Activated CD8-positive, alpha-beta T cell treated with anti-CD3 and anti-CD28 coated beads for 36 hours (primary cell): ENCODE measurements at regions of chr12 and their contacts with region 1.

Region 1: GRCh38 chr12:42023733-42024494 is 120.8 kb downstream of the GXYLT1 start:
- DNase-seq: peak; percentile 76
- ATAC-seq: peak; percentile 92
- H3K4me3 Mint-ChIP-seq: peak overlapping the region; percentile 62
- H3K27ac Mint-ChIP-seq: no peak overlapping the region
- H3K4me1 Mint-ChIP-seq: peaks cover 8% of the 10 kb centered on the region
- H3K27me3 Mint-ChIP-seq: peaks cover 12% of the 10 kb centered on the region
- CTCF ChIP-seq: peak; percentile 96

Region 2: DNA sequence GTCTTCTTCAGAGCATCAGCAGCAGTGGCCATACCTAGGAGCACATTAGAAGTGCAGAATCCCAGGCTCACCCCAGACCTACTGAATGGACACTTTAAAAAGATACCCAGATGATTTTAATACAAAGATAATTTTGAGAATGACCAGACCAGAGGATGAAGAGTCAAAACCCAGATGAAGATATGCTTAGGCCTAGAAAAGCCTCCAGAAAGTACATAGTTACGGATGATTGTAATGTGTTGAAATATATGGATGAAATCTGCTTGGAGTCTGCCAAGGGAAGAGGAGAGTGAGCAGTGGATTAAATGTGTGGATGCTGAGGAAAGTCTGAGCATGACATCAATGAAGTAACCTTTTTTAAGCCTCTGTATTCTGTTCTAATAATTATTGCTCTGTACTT is 1086.0 kb before region 1 on chr12:
- CTCF ChIA-PET with region 1: no interaction called
- POLR2A ChIA-PET with region 1: no interaction called
- intact Hi-C with region 1: loop called (anchors 10 kb)
- DNase-seq: no peak
- ATAC-seq: no peak
- H3K4me3 Mint-ChIP-seq: no peak overlapping the region
- H3K27ac Mint-ChIP-seq: no peak overlapping the region
- H3K4me1 Mint-ChIP-seq: no peaks in the 10 kb centered on the region
- H3K27me3 Mint-ChIP-seq: peaks cover 2% of the 10 kb centered on the region
- CTCF ChIP-seq: no peak

Region 3: GRCh38 chr12:40946612-40947194 is 1077.2 kb before region 1 on chr12:
- CTCF ChIA-PET with region 1: interaction called, 31 read pairs
- POLR2A ChIA-PET with region 1: no interaction called
- intact Hi-C with region 1: no loop called
- DNase-seq: no peak
- ATAC-seq: peak; percentile 39
- H3K4me3 Mint-ChIP-seq: no peak overlapping the region
- H3K27ac Mint-ChIP-seq: no peak overlapping the region
- H3K4me1 Mint-ChIP-seq: no peaks in the 10 kb centered on the region
- H3K27me3 Mint-ChIP-seq: peaks cover 2% of the 10 kb centered on the region
- CTCF ChIP-seq: no peak

Region 4: DNA sequence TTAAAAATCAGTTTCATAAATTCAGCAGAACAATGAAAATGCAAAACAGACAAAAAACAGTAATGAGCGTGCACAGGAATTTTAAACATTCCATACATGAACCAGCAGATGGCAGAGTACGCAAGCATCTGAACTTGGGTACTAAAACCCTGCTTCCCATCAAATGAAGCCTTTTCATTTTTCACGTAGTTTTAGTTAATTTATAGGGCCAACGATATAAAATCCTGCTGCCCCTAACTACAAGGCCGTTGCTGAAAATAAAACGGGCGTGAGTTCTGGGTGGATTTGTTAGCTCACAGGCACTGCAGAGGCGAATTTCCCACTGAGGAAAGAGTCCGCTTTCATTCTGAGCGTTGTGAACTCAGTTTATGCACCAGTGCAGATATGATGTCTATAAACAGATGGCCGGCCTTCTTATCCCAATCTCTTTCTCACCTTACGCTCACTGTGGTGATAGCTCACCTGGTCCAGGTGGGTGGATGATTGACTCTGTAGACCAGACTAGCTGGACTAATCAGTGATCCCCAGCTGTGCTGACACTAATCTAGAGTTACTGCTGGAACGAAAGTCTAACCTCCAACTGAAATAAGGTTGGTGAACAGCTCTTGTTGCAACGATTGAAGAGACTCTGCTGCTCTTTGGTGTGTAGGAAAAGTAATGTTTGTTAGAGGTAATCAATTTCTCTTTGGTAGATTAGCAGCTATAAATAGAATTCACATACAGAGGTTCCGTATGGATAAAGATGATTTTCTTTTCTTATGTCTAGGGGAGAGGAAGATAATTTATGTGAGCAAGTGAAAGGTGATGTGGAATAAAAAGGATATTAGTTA is 746.6 kb before region 1 on chr12:
- CTCF ChIA-PET with region 1: interaction called, 17 read pairs
- POLR2A ChIA-PET with region 1: no interaction called
- intact Hi-C with region 1: loop called (anchors 10 kb)
- DNase-seq: peak; percentile 11
- ATAC-seq: no peak
- H3K4me3 Mint-ChIP-seq: no peak overlapping the region
- H3K27ac Mint-ChIP-seq: no peak overlapping the region
- H3K4me1 Mint-ChIP-seq: no peaks in the 10 kb centered on the region
- H3K27me3 Mint-ChIP-seq: peaks cover 4% of the 10 kb centered on the region
- CTCF ChIP-seq: peak; percentile 65

Region 5: DNA sequence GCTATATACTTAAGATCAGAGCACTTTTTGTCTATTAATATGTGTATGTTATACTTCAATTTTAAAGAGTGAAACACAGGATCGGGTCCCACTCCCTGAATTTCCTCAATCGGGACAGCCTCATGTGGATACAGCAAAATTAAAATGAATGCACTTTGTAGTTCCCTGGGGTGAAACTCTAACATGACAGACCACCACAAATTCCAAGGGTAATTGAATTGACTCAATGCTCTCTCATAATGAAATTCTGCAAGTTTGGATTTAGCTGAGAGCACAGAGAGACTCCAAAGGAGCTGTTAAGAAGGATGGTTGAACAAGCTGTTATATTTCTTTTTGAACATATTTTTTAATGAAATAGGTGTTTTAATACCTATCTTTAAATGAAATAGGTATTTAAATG is 292.9 kb before region 1 on chr12:
- CTCF ChIA-PET with region 1: interaction called, 11 read pairs
- POLR2A ChIA-PET with region 1: no interaction called
- intact Hi-C with region 1: no loop called
- DNase-seq: no peak
- ATAC-seq: no peak
- H3K4me3 Mint-ChIP-seq: no peak overlapping the region
- H3K27ac Mint-ChIP-seq: no peak overlapping the region
- H3K4me1 Mint-ChIP-seq: no peaks in the 10 kb centered on the region
- H3K27me3 Mint-ChIP-seq: peaks cover 2% of the 10 kb centered on the region
- CTCF ChIP-seq: no peak

Region 6: DNA sequence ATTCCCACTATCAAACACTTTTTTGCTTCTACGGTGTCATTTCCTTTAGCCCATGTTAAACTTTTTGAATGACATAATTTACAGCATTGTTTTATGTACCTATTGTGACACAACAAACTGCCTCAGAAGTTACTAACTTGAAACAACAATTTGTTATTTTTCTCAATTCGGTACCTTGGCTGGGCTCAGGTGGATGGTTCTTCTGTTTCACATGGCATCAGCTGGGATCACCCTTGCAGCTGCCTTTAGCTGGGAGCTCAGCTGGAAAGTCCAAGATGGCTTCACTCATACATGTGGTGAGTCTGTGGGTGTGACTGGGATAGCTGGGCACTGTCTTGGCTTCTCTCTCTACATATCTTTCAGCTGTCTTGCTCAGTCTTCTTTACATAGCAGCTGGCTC is 35.2 kb before region 1 on chr12:
- CTCF ChIA-PET with region 1: interaction called, 12 read pairs
- POLR2A ChIA-PET with region 1: no interaction called
- intact Hi-C with region 1: no loop called
- DNase-seq: no peak
- ATAC-seq: no peak
- H3K4me3 Mint-ChIP-seq: no peak overlapping the region
- H3K27ac Mint-ChIP-seq: no peak overlapping the region
- H3K4me1 Mint-ChIP-seq: no peaks in the 10 kb centered on the region
- H3K27me3 Mint-ChIP-seq: peaks cover 2% of the 10 kb centered on the region
- CTCF ChIP-seq: no peak

Region 7: DNA sequence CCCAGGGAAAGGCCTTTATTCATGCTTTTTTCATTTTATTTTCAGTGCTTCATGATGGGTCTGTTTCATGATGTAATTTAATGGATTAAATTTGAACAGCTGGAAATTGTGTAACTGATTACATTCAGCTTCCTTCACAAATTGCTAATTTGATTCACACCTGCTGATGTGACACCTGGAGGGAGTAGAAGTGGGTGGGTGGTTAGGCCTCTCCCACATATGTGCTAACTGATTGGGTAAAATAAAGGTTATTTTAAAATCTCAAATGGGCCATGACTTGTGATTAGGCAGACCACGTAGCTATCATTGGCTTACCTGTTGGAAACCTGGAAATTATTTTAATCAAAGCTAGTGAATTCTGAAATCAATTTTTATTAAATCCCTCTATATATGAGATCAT is 21.4 kb before region 1 on chr12:
- CTCF ChIA-PET with region 1: interaction called, 12 read pairs
- POLR2A ChIA-PET with region 1: no interaction called
- intact Hi-C with region 1: no loop called
- DNase-seq: no peak
- ATAC-seq: no peak
- H3K4me3 Mint-ChIP-seq: no peak overlapping the region
- H3K27ac Mint-ChIP-seq: no peak overlapping the region
- H3K4me1 Mint-ChIP-seq: no peaks in the 10 kb centered on the region
- H3K27me3 Mint-ChIP-seq: peaks cover 3% of the 10 kb centered on the region
- CTCF ChIP-seq: no peak